ENCODE measurements at regions of chr7 and their contacts with region 1.

Region 1: GRCh38 chr7:63887031-63887430 is 111.6 kb upstream of the ZNF722 start:
- DNase-seq: no peak
- ATAC-seq: no peak
- H3K4me3 ChIP-seq: no peak overlapping the region
- H3K27ac ChIP-seq: no peak overlapping the region
- H3K4me1 ChIP-seq: no peaks in the 10 kb centered on the region
- H3K27me3 ChIP-seq: no peaks in the 10 kb centered on the region
- CTCF ChIP-seq: no peak

Region 2: GRCh38 chr7:63931985-63932577 is 45.0 kb after region 1 on chr7:
- intact Hi-C with region 1: loop called in 1 of 10 experiments (anchors 10 kb)
- DNase-seq: no peak
- ATAC-seq: no peak
- H3K4me3 ChIP-seq: no peak overlapping the region
- H3K27ac ChIP-seq: no peak overlapping the region
- H3K4me1 ChIP-seq: peaks cover 0 to 4% (median 2%) of the 10 kb centered on the region in 9 donors
- H3K27me3 ChIP-seq: peaks cover 0 to 19% (median 0%) of the 10 kb centered on the region in 7 donors
- CTCF ChIP-seq: no peak

Region 3: DNA sequence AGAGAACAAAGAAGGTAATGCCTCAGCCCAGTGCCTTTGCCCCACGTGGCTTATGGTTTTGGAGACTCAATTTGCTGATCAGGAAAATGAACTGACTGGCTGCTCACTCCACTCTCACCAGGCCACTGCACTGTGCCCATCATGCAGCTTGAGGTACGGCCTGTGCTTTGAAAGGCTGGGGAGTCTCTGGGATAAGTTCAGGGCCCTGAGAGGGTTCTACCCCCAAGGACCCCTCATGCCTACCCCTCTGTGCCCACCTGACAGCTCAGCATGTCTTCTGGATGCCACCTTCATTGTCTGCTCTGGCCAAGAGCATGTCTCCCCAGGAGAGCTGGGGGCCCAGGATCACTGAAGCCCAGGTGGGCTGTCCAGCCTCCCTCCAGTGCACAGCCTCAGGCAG is 66.2 kb after region 1 on chr7:
- intact Hi-C with region 1: loop called in 1 of 10 experiments (anchors 10 kb)
- DNase-seq: no peak
- ATAC-seq: no peak
- H3K4me3 ChIP-seq: no peak overlapping the region
- H3K27ac ChIP-seq: no peak overlapping the region
- H3K4me1 ChIP-seq: no peaks in the 10 kb centered on the region
- H3K27me3 ChIP-seq: no peaks in the 10 kb centered on the region
- CTCF ChIP-seq: no peak

Measured in heart right ventricle (tissue), 16 donors.